ENCODE measurements at regions of chr14 and their contacts with region 1.

Region 1: DNA sequence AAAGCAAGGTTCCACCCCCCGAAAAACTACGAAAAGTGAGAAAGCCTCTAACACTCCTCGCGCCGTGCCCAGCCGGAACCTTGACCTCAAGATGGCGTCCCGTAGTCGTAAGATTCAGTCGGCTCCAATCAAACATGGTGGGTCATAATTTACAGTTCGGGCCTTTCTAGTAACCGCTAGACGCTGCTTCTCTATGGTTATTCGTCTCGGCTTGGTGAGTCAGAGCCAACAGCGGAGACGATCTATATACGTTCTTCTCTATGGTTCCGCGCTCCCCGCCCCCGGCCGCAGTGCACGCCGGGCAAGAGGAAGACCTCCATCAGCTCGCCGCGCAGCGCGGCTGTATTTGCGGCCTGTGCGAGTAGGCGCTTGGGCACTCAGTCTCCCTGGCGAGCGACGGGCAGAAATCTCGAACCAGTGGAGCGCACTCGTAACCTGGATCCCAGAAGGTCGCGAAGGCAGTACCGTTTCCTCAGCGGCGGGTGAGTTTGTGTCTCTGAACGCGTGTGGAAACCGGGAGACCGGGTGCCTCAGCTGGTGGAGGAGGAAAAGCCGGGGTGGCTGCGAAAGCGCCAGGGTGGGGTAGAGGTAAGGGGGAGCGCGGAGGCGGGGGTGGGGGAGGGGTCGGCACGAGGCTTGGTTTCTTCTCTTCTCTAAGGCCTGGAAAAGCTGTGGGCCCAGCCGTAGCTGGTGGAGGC is at the start of gene RBM25:
- DNase-seq: peak; percentile 97
- H3K4me3 Mint-ChIP-seq: no peak within 1 kb of the TSS
- H3K27ac Mint-ChIP-seq: no peak within 1 kb of the TSS
- H3K4me1 Mint-ChIP-seq: peaks cover 42% of the 10 kb centered on the region
- H3K27me3 Mint-ChIP-seq: no peaks in the 10 kb centered on the region
- total RNA-seq, gene RBM25: 86.3 to 93.6 TPM

Region 2: GRCh38 chr14:72916177-72916576 is 142.2 kb before region 1 on chr14:
- CTCF ChIA-PET with region 1: no interaction called
- intact Hi-C with region 1: no loop called
- DNase-seq: no peak
- H3K4me3 Mint-ChIP-seq: no peak overlapping the region
- H3K27ac Mint-ChIP-seq: no peak overlapping the region
- H3K4me1 Mint-ChIP-seq: no peaks in the 10 kb centered on the region
- H3K27me3 Mint-ChIP-seq: peaks cover 4% of the 10 kb centered on the region

Region 3: DNA sequence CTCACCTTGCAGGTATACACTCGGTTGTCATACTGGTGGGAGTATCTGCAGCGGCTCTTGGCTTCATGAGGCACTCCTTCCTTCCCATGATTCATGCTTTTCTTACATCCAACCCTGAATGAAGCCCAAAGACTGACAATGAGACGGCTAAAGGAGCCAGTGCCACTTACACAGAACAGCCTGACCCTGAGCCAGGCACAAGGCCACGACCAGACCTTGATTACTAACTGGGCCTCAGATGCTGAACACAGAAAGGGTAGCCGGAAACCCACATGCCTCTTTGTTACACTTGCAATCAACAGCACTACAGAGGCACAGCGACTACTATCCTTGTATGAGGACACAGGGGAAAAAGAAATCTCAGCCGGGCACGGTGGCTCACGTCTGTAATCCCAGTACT is 79.5 kb before region 1 on chr14:
- CTCF ChIA-PET with region 1: no interaction called
- intact Hi-C with region 1: no loop called
- DNase-seq: no peak
- H3K4me3 Mint-ChIP-seq: no peak overlapping the region
- H3K27ac Mint-ChIP-seq: no peak overlapping the region
- H3K4me1 Mint-ChIP-seq: no peaks in the 10 kb centered on the region
- H3K27me3 Mint-ChIP-seq: no peaks in the 10 kb centered on the region

Region 4: GRCh38 chr14:73026845-73027542 is 31.4 kb before region 1 on chr14 and contains the start of gene ZFYVE1:
- CTCF ChIA-PET with region 1: interaction called, 6 read pairs
- intact Hi-C with region 1: loop called (anchors 1 kb)
- DNase-seq: peak; percentile 97
- H3K4me3 Mint-ChIP-seq: peak within 1 kb of the TSS; percentile 92
- H3K27ac Mint-ChIP-seq: peak within 1 kb of the TSS; percentile 80
- H3K4me1 Mint-ChIP-seq: peaks cover 39% of the 10 kb centered on the region
- H3K27me3 Mint-ChIP-seq: no peaks in the 10 kb centered on the region
- total RNA-seq, gene ZFYVE1: 8.5 to 9.2 TPM

Region 5: GRCh38 chr14:73458151-73458976 is 400.0 kb after region 1 on chr14 and contains the start of gene NUMB:
- CTCF ChIA-PET with region 1: interaction called, 3 read pairs
- intact Hi-C with region 1: loop called (anchors 1 kb)
- DNase-seq: peak; percentile 99
- H3K4me3 Mint-ChIP-seq: peak within 1 kb of the TSS; percentile 92
- H3K27ac Mint-ChIP-seq: peak within 1 kb of the TSS; percentile 79
- H3K4me1 Mint-ChIP-seq: peaks cover 42% of the 10 kb centered on the region
- H3K27me3 Mint-ChIP-seq: no peaks in the 10 kb centered on the region
- total RNA-seq, gene NUMB: 24.2 to 26.4 TPM

Region 6: GRCh38 chr14:73785873-73786695 is 727.7 kb after region 1 on chr14:
- CTCF ChIA-PET with region 1: no interaction called
- intact Hi-C with region 1: loop called (anchors 1 kb)
- DNase-seq: peak; percentile 75
- H3K4me3 Mint-ChIP-seq: peak overlapping the region; percentile 90
- H3K27ac Mint-ChIP-seq: peak overlapping the region; percentile 91
- H3K4me1 Mint-ChIP-seq: peaks cover 56% of the 10 kb centered on the region
- H3K27me3 Mint-ChIP-seq: no peaks in the 10 kb centered on the region

Region 7: DNA sequence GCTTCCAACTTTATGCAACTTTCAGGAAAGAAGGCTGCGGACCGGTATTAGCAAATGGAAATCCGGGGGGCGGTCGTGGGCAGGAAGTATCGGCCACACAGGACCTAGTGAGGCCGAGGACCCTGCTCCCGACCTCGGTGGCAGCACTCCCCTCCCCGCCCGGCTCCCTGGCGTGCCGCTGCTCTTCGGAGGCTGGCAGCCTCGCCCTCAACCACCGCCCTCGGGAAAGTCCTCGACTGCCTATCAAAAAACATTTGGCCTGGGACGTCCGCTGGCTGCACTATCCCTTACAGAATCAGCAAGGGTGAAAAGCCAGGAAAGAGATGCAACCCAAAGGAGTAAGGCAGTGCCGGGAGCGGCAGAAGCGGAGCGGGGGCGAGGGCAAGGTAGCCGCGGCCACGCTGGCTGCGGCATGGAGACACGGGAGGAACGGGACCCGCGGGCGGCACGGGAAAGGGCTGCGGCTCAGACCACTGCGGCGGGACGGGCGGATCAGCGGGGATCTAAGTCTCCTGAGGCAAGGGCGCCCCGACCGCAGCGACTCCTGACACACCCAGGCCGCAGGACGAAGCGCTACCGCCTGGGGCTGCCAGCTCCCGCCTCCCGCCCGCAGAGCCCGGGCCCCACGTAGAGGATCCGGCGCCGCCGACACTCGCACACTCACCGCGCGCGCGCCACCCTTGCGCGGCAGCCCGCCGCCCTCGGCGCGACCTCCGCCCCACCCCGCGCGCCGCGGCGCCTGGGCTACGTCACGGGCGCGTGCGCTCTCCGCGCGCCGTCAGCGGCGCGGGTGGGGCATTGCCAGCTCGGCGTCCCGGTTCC is 960.4 kb after region 1 on chr14 and contains the starts of genes BBOF1 and ENTPD5:
- CTCF ChIA-PET with region 1: no interaction called
- intact Hi-C with region 1: loop called (anchors 2 kb)
- DNase-seq: peak; percentile 80
- H3K4me3 Mint-ChIP-seq: peak within 1 kb of the TSS; percentile 86
- H3K27ac Mint-ChIP-seq: peak within 1 kb of the TSS; percentile 90
- H3K4me1 Mint-ChIP-seq: peaks cover 13% of the 10 kb centered on the region
- H3K27me3 Mint-ChIP-seq: no peaks in the 10 kb centered on the region
- total RNA-seq, gene BBOF1: 1.3 to 1.7 TPM
- total RNA-seq, gene ENTPD5: 7.3 to 9.6 TPM

Measured in activated naive CD4-positive, alpha-beta T cell treated with anti-CD3 and anti-CD28 coated beads for 36 hours (primary cell).